ENCODE measurements at regions of chr11 and their contacts with region 1.

Region 1: DNA sequence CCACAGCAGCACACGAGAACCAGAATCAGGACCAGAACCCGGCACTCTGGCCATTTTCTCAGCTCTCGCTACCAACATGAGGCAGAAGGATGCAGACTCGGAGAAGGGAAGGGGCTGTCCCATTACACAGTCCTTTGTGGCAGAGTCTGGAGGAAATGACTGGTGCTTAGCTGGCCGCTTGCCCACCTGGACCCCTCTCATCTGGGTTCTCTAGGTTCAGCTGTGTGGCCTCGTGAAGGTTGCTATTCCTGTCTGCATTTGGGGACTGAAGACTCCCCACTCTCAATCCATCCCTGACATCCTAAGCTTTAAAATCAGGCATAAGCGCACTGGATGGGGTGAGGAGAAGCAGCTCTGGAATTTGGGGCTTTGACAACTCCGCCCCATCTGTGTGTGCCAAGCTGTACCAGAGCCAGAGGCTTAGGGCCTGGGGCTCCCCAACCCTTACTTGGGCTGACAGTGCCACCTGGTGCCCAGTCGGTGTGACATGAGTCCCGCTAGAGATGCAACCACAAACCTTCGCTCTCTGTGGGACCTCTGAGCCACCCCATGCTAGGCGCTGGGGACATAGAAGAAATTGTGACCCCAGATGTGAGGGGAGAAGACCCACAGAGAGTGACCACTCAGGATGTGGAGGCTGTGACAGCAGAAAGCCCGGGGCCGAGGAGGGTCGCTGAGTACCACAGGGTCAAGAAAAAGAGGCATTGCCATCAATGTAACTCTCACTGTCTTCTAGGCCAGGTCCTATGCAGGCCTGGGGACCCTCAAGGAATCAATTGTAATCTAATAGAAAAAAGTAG is 35.9 kb upstream of the FCHSD2 start:
- DNase-seq: peak; percentile 36
- H3K4me3 ChIP-seq: no peak overlapping the region
- CTCF ChIP-seq: peak; percentile 85

Region 2: GRCh38 chr11:72722050-72722748 is 455.8 kb before region 1 on chr11:
- CTCF ChIA-PET with region 1: interaction called, 92 read pairs
- POLR2A ChIA-PET with region 1: no interaction called
- DNase-seq: peak; percentile 84
- H3K4me3 ChIP-seq: peak overlapping the region; percentile 77
- CTCF ChIP-seq: no peak

Region 3: GRCh38 chr11:72821883-72822799 is 355.8 kb before region 1 on chr11:
- CTCF ChIA-PET with region 1: interaction called, 324 read pairs
- POLR2A ChIA-PET with region 1: no interaction called
- DNase-seq: no peak
- H3K4me3 ChIP-seq: peak overlapping the region; percentile 67
- CTCF ChIP-seq: peak; percentile 37

Region 4: DNA sequence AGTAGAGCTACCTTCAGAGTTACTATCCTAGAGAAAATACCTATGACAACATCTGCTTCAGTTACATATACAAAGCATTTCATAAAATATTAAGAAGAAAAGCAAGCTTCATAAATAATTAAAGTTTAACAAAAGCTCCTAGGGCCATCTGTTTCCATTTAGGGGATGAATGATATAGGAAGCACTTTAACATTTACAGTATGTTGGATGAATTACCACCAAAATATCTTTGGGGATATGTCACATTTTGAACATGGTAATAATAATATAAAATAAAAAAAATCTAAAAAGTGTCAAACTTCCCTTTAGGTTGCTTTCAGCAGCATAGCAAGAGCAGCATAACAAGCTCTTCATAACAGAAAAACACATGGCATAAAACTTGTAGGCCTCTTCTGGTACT is 259.1 kb before region 1 on chr11:
- CTCF ChIA-PET with region 1: interaction called, 78 read pairs
- POLR2A ChIA-PET with region 1: no interaction called
- DNase-seq: no peak
- H3K4me3 ChIP-seq: no peak overlapping the region
- CTCF ChIP-seq: no peak

Region 5: GRCh38 chr11:73147771-73148681 is 30.0 kb before region 1 on chr11:
- CTCF ChIA-PET with region 1: interaction called, 30 read pairs
- POLR2A ChIA-PET with region 1: no interaction called
- DNase-seq: no peak
- H3K4me3 ChIP-seq: no peak overlapping the region
- CTCF ChIP-seq: no peak

Region 6: GRCh38 chr11:73242251-73243079 is 64.5 kb after region 1 on chr11:
- CTCF ChIA-PET with region 1: interaction called, 210 read pairs
- POLR2A ChIA-PET with region 1: no interaction called
- DNase-seq: no peak
- H3K4me3 ChIP-seq: peak overlapping the region; percentile 13; the same call in 1 of the 2 replicates
- CTCF ChIP-seq: peak; percentile 94

Measured in AG04449 (cell line).